Activated naive CD4-positive, alpha-beta T cell treated with anti-CD3 and anti-CD28 coated beads for 36 hours (primary cell): ENCODE measurements at regions of chr12 and their contacts with region 1.

Region 1: DNA sequence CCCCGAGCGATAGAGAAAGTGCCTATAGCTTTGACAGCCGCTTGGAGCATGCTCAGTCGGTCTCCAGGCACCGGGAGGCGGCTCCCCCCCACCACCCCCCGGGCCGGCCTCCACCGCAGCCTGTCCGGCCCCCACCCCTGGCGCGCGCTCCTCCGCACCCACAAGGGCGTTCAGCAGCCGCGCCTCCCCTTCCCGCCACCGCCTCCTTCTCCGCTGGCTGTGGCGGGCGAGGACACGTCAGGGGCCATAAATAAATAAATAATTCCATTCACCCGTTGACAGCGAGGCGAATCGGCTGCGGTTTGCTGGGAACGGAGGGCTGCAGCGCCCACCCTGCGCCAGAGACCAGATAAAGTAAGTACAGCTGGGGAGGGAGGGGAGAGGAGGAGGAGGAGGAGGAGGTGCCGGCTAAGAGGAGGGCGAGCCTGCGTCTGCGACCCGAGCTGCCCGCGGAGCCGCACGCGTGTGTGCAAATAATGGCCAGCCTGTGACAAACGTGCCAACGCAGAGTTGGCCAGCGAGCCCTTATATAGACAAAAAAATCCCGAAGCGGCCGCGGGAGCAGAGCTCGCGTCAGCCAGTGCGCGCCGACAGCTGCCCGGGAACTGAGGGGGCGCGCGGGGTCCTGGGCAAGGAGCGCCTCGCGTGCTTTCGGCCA is at the start of gene SLC16A7:
- DNase-seq: peak; percentile 84
- H3K4me3 Mint-ChIP-seq: peak within 1 kb of the TSS; percentile 89
- H3K27ac Mint-ChIP-seq: peak within 1 kb of the TSS; percentile 98
- H3K4me1 Mint-ChIP-seq: peaks cover 49% of the 10 kb centered on the region
- H3K27me3 Mint-ChIP-seq: no peaks in the 10 kb centered on the region
- total RNA-seq, gene SLC16A7: 27.5 to 27.8 TPM

Region 2: DNA sequence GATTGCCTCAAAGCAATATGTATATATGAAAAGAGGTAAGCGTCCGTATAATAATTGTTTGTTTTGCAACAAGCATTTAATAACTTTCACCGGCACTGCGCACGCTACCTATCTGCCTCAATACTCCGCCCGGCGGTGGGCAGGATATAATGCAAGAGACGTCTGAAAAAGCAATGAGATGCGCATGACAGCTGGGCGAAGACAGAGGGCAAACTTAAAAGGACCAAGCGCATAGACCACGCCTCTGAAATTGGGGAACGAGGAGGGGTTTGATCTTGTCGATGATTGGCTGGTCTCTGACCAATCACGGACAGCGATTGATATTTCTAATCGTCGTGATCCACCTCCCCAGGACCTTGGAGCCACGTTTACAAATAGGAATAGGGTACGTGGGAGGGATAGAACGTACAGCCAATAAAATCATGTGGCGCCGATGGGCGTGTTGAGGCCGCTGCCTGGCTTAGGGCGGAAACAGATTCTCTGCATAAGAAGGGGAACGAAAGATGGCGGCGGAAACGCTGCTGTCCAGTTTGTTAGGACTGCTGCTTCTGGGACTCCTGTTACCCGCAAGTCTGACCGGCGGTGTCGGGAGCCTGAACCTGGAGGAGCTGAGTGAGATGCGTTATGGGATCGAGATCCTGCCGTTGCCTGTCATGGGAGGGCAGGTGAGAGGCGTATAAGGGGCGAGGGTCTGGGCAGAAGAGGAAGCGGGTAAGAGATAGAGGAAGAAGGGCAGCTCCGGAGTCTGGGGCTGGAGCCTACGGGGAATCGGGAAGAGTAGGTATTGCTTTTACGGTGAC is 1902.2 kb before region 1 on chr12 and contains the start of gene OS9:
- CTCF ChIA-PET with region 1: no interaction called
- intact Hi-C with region 1: loop called (anchors 5 kb)
- DNase-seq: peak; percentile 99
- H3K4me3 Mint-ChIP-seq: no peak within 1 kb of the TSS
- H3K27ac Mint-ChIP-seq: no peak within 1 kb of the TSS
- H3K4me1 Mint-ChIP-seq: peaks cover 3% of the 10 kb centered on the region
- H3K27me3 Mint-ChIP-seq: no peaks in the 10 kb centered on the region
- total RNA-seq, gene OS9: 60.7 to 60.9 TPM

Region 3: GRCh38 chr12:57836442-57837375 is 1759.3 kb before region 1 on chr12:
- CTCF ChIA-PET with region 1: no interaction called
- intact Hi-C with region 1: loop called (anchors 5 kb)
- DNase-seq: peak; percentile 81
- H3K4me3 Mint-ChIP-seq: peak overlapping the region; percentile 40
- H3K27ac Mint-ChIP-seq: peak overlapping the region; percentile 89
- H3K4me1 Mint-ChIP-seq: peaks cover 97% of the 10 kb centered on the region
- H3K27me3 Mint-ChIP-seq: no peaks in the 10 kb centered on the region

Region 4: DNA sequence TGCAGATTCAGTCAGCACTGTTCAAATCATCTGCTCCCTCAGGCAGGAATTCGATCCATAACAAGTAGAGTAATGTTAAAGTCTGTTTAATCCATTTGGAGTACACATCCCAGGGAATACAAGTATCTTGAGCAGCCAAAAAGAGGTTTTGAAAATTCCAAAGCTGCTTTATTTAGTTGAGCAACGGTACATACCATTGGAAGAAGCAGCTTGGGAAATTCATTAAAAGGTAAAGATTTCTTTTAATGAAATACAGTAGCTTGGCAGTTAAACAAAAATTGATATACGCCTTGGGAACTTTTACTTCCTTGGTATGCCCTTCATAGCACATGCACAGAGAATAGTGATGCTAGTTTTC is 829.5 kb before region 1 on chr12:
- CTCF ChIA-PET with region 1: no interaction called
- intact Hi-C with region 1: no loop called
- DNase-seq: no peak
- H3K4me3 Mint-ChIP-seq: no peak overlapping the region
- H3K27ac Mint-ChIP-seq: no peak overlapping the region
- H3K4me1 Mint-ChIP-seq: no peaks in the 10 kb centered on the region
- H3K27me3 Mint-ChIP-seq: no peaks in the 10 kb centered on the region

Region 5: GRCh38 chr12:59322473-59322872 is 273.5 kb before region 1 on chr12:
- CTCF ChIA-PET with region 1: no interaction called
- intact Hi-C with region 1: no loop called
- DNase-seq: no peak
- H3K4me3 Mint-ChIP-seq: no peak overlapping the region
- H3K27ac Mint-ChIP-seq: no peak overlapping the region
- H3K4me1 Mint-ChIP-seq: no peaks in the 10 kb centered on the region
- H3K27me3 Mint-ChIP-seq: no peaks in the 10 kb centered on the region

Region 6: GRCh38 chr12:59408431-59408830 is 187.6 kb before region 1 on chr12:
- CTCF ChIA-PET with region 1: no interaction called
- intact Hi-C with region 1: loop called (anchors 1 kb)
- DNase-seq: no peak
- H3K4me3 Mint-ChIP-seq: no peak overlapping the region
- H3K27ac Mint-ChIP-seq: no peak overlapping the region
- H3K4me1 Mint-ChIP-seq: peaks cover 12% of the 10 kb centered on the region
- H3K27me3 Mint-ChIP-seq: no peaks in the 10 kb centered on the region

Region 7: GRCh38 chr12:59633986-59634653 is 38.1 kb after region 1 on chr12:
- CTCF ChIA-PET with region 1: no interaction called
- intact Hi-C with region 1: loop called (anchors 1 kb)
- DNase-seq: no peak
- H3K4me3 Mint-ChIP-seq: no peak overlapping the region
- H3K27ac Mint-ChIP-seq: no peak overlapping the region
- H3K4me1 Mint-ChIP-seq: peaks cover 51% of the 10 kb centered on the region
- H3K27me3 Mint-ChIP-seq: no peaks in the 10 kb centered on the region

Region 8: GRCh38 chr12:59808317-59808910 is 212.4 kb after region 1 on chr12:
- CTCF ChIA-PET with region 1: interaction called, 5 read pairs
- intact Hi-C with region 1: loop called (anchors 2 kb)
- DNase-seq: no peak
- H3K4me3 Mint-ChIP-seq: no peak overlapping the region
- H3K27ac Mint-ChIP-seq: no peak overlapping the region
- H3K4me1 Mint-ChIP-seq: no peaks in the 10 kb centered on the region
- H3K27me3 Mint-ChIP-seq: no peaks in the 10 kb centered on the region